Activated CD4-positive, alpha-beta T cell treated with anti-CD3 and anti-CD28 coated beads, Interleukin-2, amount 10 ng/mL, durations not matched to agents 24 days and 14 days (primary cell): ENCODE measurements at regions of chr7 and their contacts with region 1.

Region 1: GRCh38 chr7:57867884-57868701 is 418.1 kb downstream of the ZNF716 start:
- DNase-seq: no peak
- H3K4me3 Mint-ChIP-seq: no peak overlapping the region
- H3K27ac Mint-ChIP-seq: no peak overlapping the region
- H3K4me1 Mint-ChIP-seq: no peaks in the 10 kb centered on the region
- H3K27me3 Mint-ChIP-seq: peaks cover 10% of the 10 kb centered on the region

Region 2: GRCh38 chr7:57300747-57301146 is 567.3 kb before region 1 on chr7:
- intact Hi-C with region 1: no loop called
- DNase-seq: no peak
- H3K4me3 Mint-ChIP-seq: no peak overlapping the region
- H3K27ac Mint-ChIP-seq: no peak overlapping the region
- H3K4me1 Mint-ChIP-seq: no peaks in the 10 kb centered on the region
- H3K27me3 Mint-ChIP-seq: no peaks in the 10 kb centered on the region

Region 3: GRCh38 chr7:57505176-57505575 is 362.9 kb before region 1 on chr7:
- intact Hi-C with region 1: no loop called
- DNase-seq: no peak
- H3K4me3 Mint-ChIP-seq: no peak overlapping the region
- H3K27ac Mint-ChIP-seq: no peak overlapping the region
- H3K4me1 Mint-ChIP-seq: no peaks in the 10 kb centered on the region
- H3K27me3 Mint-ChIP-seq: no peaks in the 10 kb centered on the region

Region 4: DNA sequence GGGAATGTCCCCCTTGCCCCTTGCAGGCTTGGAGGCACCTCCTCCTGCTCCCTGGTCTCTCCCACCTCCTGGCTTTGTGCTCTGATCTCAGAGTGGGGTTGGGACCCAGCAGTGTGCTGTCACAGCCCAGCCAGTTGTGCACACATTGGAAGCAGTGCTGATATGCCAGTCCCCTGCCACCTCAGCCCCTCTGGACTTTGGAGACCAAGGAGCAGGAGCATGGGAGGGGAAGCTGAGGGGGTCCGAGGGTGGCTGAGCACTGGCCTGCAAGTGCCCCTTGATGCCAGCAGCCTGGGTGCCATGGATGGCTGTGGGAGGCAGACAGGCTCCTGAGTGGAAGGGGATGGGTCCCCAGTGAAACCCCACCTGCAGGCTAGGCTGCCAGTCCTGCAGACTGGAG is 182.7 kb before region 1 on chr7:
- intact Hi-C with region 1: loop called (anchors 10 kb)
- DNase-seq: no peak
- H3K4me3 Mint-ChIP-seq: no peak overlapping the region
- H3K27ac Mint-ChIP-seq: no peak overlapping the region
- H3K4me1 Mint-ChIP-seq: no peaks in the 10 kb centered on the region
- H3K27me3 Mint-ChIP-seq: no peaks in the 10 kb centered on the region

Region 5: DNA sequence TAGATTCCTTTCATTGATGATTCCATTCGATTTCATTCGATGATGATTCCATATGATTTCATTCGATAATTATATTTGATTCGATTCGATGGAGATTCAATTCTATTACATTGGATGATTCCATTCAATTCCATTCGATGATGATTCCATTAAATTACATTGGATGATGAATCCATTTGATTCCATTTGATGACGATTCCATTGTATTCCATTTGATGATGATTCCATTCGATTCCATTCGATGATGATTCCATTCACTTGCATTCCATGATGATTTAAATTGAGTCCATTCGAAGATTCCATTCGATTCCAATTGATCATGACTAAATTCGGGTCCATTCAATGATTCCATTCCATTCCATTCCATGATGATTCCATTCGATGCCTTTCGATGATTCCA is 239.8 kb after region 1 on chr7:
- intact Hi-C with region 1: no loop called
- DNase-seq: no peak
- H3K4me3 Mint-ChIP-seq: no peak overlapping the region
- H3K27ac Mint-ChIP-seq: no peak overlapping the region
- H3K4me1 Mint-ChIP-seq: no peaks in the 10 kb centered on the region
- H3K27me3 Mint-ChIP-seq: no peaks in the 10 kb centered on the region